Pancreas (tissue), 10 donors: ENCODE measurements at regions of chr1 and their contacts with region 1.

Region 1: GRCh38 chr1:53393325-53393792 is 65.5 kb upstream of the LRP8 start:
- DNase-seq: peak; percentile 40 to 93 (median 78)
- ATAC-seq: peak; percentile 80 to 95 (median 93)
- H3K4me3 ChIP-seq: no peak overlapping the region
- H3K27ac ChIP-seq: no peak overlapping the region
- H3K4me1 ChIP-seq: no peaks in the 10 kb centered on the region
- H3K27me3 ChIP-seq: no peaks in the 10 kb centered on the region
- CTCF ChIP-seq: peak; percentile 88 to 97 (median 94)

Region 2: GRCh38 chr1:53272349-53273315 is 120.7 kb before region 1 on chr1:
- intact Hi-C with region 1: loop called (anchors 2 to 10 kb)
- DNase-seq: no peak
- ATAC-seq: no peak
- H3K4me3 ChIP-seq: no peak overlapping the region
- H3K27ac ChIP-seq: no peak overlapping the region
- H3K4me1 ChIP-seq: no peaks in the 10 kb centered on the region
- H3K27me3 ChIP-seq: no peaks in the 10 kb centered on the region
- CTCF ChIP-seq: no peak

Region 3: DNA sequence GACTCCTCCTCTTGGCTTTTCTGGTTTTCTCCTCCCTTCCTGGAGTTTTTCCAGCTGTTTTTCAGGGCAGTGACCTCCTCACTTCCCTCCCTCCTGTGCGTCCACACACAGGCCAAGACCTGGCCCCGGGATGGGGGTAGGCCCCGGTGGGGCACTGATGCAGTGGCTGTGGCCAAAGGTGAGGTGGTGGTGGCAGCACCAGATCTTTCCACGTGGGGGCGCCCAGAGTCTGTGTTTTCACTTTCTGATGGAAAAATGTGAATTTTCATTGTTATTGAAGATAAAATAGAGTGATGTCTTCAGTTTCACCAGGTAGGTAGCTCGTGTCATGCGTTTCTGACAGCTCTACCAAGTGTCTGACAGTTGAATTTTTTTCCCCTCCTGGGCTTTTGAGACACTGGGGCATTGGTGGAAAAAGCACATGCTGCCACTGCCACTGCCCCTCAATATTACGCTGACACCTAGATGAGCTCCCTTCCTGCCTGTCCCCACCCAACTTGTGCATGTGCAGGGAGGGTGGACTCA is 115.1 kb before region 1 on chr1:
- intact Hi-C with region 1: loop called (anchors 2 to 10 kb)
- DNase-seq: peak in 5 of 6 donors; percentile 29 to 86 (median 64)
- ATAC-seq: peak; percentile 76 to 88 (median 82)
- H3K4me3 ChIP-seq: no peak overlapping the region
- H3K27ac ChIP-seq: no peak overlapping the region
- H3K4me1 ChIP-seq: no peaks in the 10 kb centered on the region
- H3K27me3 ChIP-seq: no peaks in the 10 kb centered on the region
- CTCF ChIP-seq: peak; percentile 53 to 87 (median 82)